ENCODE measurements at regions of chr9 and their contacts with region 1.

Region 1: DNA sequence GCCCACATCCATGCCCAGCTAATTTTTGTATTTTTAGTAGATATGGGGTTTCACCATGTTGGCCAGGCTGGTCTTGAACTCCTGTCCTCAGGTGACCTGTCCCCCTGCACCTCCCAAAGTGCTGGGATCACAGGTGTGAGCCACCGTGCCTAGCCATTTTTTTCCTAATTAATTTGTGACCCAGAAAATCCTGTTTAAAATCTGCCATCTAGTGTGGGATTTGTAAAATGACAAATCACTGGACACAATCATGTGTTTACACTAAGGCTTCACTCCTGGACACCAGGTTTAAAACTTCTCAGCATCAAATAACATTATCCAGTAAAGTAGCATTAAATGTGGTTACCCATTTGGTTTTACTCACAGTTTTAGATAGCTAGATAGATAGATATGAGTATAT is 18.6 kb upstream of the KDM4C start:
- H3K4me3 Mint-ChIP-seq: no peak overlapping the region
- H3K27ac Mint-ChIP-seq: no peak overlapping the region
- H3K4me1 Mint-ChIP-seq: no peaks in the 10 kb centered on the region
- H3K27me3 Mint-ChIP-seq: no peaks in the 10 kb centered on the region

Region 2: DNA sequence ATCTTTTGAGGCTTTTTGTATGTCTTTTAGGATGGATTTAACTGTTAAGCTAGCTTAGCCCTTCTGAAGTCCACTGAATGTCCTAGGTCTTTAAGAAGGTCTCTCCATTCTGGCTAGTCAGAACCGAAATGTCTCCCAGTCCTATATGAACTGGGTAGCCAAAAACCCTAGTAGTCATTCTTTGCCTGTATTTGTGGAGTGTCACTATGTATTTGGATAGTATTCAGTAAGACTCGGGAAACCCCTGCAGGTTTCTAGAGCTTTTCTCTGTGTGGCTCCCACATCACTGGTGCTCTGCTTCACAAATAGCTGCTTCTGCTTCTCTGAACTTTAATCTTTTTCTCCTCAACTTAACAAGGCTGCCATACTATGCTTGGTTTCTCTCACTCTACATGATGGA is 1042.3 kb before region 1 on chr9:
- intact Hi-C with region 1: no loop called
- H3K4me3 Mint-ChIP-seq: no peak overlapping the region
- H3K27ac Mint-ChIP-seq: no peak overlapping the region
- H3K4me1 Mint-ChIP-seq: no peaks in the 10 kb centered on the region
- H3K27me3 Mint-ChIP-seq: no peaks in the 10 kb centered on the region

Region 3: DNA sequence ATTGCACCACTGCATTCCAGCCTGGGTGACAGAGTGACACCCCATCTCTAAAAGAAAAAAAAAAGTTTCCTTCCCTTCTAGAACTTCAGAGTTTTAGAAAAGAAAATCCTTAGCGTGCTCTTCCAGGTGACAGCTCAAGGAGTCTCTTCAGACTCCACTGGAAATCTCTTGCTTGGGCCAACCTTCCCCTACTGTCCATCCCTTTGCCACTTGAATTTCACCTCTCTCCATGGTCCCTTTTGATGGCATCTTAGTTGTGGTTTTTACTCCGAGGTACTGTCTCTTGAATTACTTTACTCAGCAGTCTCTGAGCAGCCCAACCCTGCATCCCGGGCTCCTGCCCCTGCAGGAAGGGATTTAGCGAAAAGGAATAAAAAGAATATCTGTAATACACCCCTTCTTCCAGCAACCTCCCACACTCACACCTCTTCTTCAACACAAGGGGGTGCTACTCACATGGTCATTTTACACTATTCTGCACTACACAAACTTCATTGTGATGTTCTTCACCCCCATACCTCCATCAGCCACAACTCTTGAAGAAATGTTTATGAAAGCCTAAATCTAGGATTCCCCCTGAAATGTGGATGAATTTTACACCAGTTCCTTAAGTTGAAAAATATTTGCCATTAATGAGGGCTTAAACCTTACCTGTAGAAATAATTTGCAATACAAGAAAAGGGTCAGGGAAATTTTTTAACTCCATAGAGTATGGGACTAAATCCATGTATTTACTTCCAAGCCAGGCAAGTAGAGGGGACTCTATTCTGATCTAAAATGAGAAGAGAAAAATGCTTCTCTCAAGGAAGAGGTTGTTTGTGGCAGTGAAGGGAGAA is 385.1 kb before region 1 on chr9:
- intact Hi-C with region 1: loop called (anchors 2 kb)
- H3K4me3 Mint-ChIP-seq: no peak overlapping the region
- H3K27ac Mint-ChIP-seq: no peak overlapping the region
- H3K4me1 Mint-ChIP-seq: no peaks in the 10 kb centered on the region
- H3K27me3 Mint-ChIP-seq: peaks cover 12% of the 10 kb centered on the region

Region 4: GRCh38 chr9:6584881-6585597 is 154.2 kb before region 1 on chr9:
- intact Hi-C with region 1: loop called (anchors 2 kb)
- H3K4me3 Mint-ChIP-seq: no peak overlapping the region
- H3K27ac Mint-ChIP-seq: no peak overlapping the region
- H3K4me1 Mint-ChIP-seq: peaks cover 13% of the 10 kb centered on the region
- H3K27me3 Mint-ChIP-seq: no peaks in the 10 kb centered on the region

Measured in dendritic cell treated with granulocyte-macrophage colony-stimulating factor and Interleukin-4, amounts not matched to agents 40 ng/mL and 50 ng/mL, for 4 days (primary cell).